Sigmoid colon (tissue), 7 donors: ENCODE measurements at regions of chr5 and their contacts with region 1.

Region 1: DNA sequence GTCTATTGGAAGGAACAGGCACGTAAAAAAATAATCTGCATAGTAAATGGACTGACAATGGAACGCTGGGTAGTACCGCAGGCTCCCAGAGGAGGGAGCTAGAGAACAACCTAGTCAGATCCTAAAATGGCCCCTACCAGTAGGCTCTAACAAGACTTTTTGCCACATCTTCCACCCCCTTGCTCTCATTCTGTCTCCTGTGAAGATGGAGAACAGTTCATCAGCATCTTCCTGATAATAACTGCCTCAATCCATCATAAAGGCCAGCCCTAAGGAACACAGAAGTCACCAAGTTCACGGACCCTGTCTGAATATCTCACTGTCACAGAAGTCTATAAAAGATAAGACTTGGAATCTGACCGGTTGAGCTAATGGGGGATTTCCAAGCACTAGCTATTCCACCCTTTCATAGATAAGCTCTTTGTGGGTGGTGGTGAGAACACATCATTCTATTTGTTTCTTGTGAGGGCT is 133.4 kb downstream of the SLC1A3 start:
- DNase-seq: no peak
- H3K4me3 ChIP-seq: no peak overlapping the region
- H3K27ac ChIP-seq: no peak overlapping the region
- H3K4me1 ChIP-seq: peaks cover 0 to 11% (median 10%) of the 10 kb centered on the region in 4 donors
- H3K27me3 ChIP-seq: peaks cover 0 to 8% (median 3%) of the 10 kb centered on the region in 3 donors
- CTCF ChIP-seq: peak in 3 of 4 experiments; percentile 40 to 59 (median 55)
- EP300 ChIP-seq: no peak
- POLR2A ChIP-seq: no peak

Region 2: DNA sequence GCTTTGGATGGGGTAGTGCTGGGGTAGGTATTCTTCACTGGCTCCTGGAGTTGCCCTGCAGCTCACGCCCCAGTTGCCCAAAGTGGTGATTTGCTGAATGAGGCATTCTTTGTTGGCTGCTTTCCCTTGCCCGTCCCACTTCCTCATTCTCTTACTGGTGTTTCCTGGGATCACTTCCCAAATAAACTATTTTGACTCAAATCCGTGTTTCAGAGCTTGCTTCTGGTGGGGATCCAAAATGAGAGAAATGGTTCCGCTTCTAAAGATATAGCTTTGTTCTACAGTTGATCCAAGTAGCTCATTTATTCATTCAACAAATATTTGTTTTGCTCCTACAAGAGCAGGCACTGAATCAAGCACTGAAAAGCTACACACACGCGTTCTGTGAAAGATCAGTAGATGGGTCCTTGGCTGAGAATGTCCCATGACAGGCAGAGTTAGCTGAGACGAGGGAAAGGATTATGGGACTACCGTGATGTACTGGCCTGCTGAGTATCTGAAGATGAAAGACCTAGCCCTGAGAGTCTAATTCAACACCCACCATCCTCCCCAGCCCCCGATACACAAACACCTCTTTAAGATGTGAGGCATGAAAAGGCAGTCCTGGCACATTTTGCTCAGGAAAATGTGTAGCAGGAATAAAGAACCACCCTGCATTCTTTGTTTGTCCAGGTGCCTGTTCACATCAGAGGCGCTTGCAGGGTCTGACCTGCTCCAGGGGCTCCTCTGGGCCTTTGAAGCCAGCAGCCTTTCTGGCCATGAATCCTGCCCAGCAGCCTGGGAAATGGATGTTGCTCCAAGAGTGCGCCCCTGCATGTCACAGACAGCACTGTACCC is 295.0 kb before region 1 on chr5:
- intact Hi-C with region 1: no loop called
- DNase-seq: no peak
- H3K4me3 ChIP-seq: no peak overlapping the region
- H3K27ac ChIP-seq: no peak overlapping the region
- H3K4me1 ChIP-seq: no peaks in the 10 kb centered on the region
- H3K27me3 ChIP-seq: no peaks in the 10 kb centered on the region
- CTCF ChIP-seq: no peak
- EP300 ChIP-seq: no peak
- POLR2A ChIP-seq: no peak

Region 3: GRCh38 chr5:36944607-36945225 is 204.9 kb after region 1 on chr5:
- intact Hi-C with region 1: loop called (anchors 5 kb)
- DNase-seq: no peak
- H3K4me3 ChIP-seq: no peak overlapping the region
- H3K27ac ChIP-seq: no peak overlapping the region
- H3K4me1 ChIP-seq: peaks cover 0 to 61% (median 39%) of the 10 kb centered on the region in 4 donors
- H3K27me3 ChIP-seq: no peaks in the 10 kb centered on the region
- CTCF ChIP-seq: peak in 2 of 4 experiments; percentile 22 to 47
- EP300 ChIP-seq: no peak
- POLR2A ChIP-seq: no peak

Region 4: DNA sequence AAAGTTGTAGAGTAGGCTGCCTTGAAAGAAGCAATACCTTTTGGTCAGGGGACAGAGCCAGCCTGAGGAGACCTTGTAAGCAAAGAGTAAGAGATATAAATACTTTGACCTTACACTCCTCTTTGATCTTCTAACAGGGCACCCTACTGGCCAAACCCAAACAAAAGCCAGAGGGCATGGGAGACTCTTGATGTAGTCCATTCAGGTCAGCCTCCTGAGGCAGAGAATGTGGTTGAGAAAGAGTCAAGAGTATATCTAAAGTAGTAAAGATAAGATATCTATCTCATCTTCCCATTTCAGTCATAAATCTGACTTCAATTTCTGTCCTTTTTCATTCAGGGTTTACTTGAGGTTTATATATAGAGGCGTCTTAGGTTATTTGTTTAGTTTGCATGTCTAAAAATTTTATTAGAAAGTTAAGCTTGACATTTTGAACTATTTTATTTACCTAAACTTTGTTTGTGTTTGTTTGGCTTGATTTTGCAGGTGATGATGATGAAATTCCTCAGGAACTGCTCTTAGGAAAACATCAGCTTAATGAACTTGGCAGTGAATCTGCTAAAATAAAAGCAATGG is 262.5 kb after region 1 on chr5:
- intact Hi-C with region 1: loop called (anchors 5 kb)
- DNase-seq: no peak
- H3K4me3 ChIP-seq: no peak overlapping the region
- H3K27ac ChIP-seq: no peak overlapping the region
- H3K4me1 ChIP-seq: peaks cover 0 to 7% (median 0%) of the 10 kb centered on the region in 4 donors
- H3K27me3 ChIP-seq: no peaks in the 10 kb centered on the region
- CTCF ChIP-seq: no peak
- EP300 ChIP-seq: no peak
- POLR2A ChIP-seq: no peak

Region 5: GRCh38 chr5:37214550-37214949 is 474.8 kb after region 1 on chr5:
- intact Hi-C with region 1: no loop called
- DNase-seq: no peak
- H3K4me3 ChIP-seq: no peak overlapping the region
- H3K27ac ChIP-seq: no peak overlapping the region
- H3K4me1 ChIP-seq: no peaks in the 10 kb centered on the region
- H3K27me3 ChIP-seq: no peaks in the 10 kb centered on the region
- CTCF ChIP-seq: no peak
- EP300 ChIP-seq: no peak
- POLR2A ChIP-seq: no peak